Calu3 (cell line): ENCODE measurements at regions of chr6 and their contacts with region 1.

Region 1: GRCh38 chr6:25312703-25313501 is 33.7 kb downstream of the CARMIL1 start:
- DNase-seq: peak; percentile 51
- H3K4me3 Mint-ChIP-seq: peak overlapping the region; percentile 54
- H3K27ac Mint-ChIP-seq: peak overlapping the region; percentile 85
- H3K4me1 Mint-ChIP-seq: peaks cover 84% of the 10 kb centered on the region
- H3K27me3 Mint-ChIP-seq: no peaks in the 10 kb centered on the region
- CTCF ChIP-seq: no peak

Region 2: GRCh38 chr6:25263657-25264056 is 49.2 kb before region 1 on chr6:
- CTCF ChIA-PET with region 1: interaction called, 36 read pairs
- intact Hi-C with region 1: loop called (anchors 10 kb)
- DNase-seq: no peak
- H3K4me3 Mint-ChIP-seq: no peak overlapping the region
- H3K27ac Mint-ChIP-seq: no peak overlapping the region
- H3K4me1 Mint-ChIP-seq: peaks cover 10% of the 10 kb centered on the region
- H3K27me3 Mint-ChIP-seq: no peaks in the 10 kb centered on the region
- CTCF ChIP-seq: no peak

Region 3: GRCh38 chr6:25297039-25297441 is 15.9 kb before region 1 on chr6:
- CTCF ChIA-PET with region 1: interaction called, 22 read pairs
- intact Hi-C with region 1: loop called (anchors 2 kb)
- DNase-seq: no peak
- H3K4me3 Mint-ChIP-seq: no peak overlapping the region
- H3K27ac Mint-ChIP-seq: no peak overlapping the region
- H3K4me1 Mint-ChIP-seq: peaks cover 62% of the 10 kb centered on the region
- H3K27me3 Mint-ChIP-seq: no peaks in the 10 kb centered on the region
- CTCF ChIP-seq: no peak

Region 4: GRCh38 chr6:25302677-25303128 is 10.2 kb before region 1 on chr6:
- CTCF ChIA-PET with region 1: interaction called, 22 read pairs
- intact Hi-C with region 1: loop called (anchors 1 kb)
- DNase-seq: peak; percentile 35
- H3K4me3 Mint-ChIP-seq: peak overlapping the region; percentile 18
- H3K27ac Mint-ChIP-seq: peak overlapping the region; percentile 17
- H3K4me1 Mint-ChIP-seq: peaks cover 57% of the 10 kb centered on the region
- H3K27me3 Mint-ChIP-seq: no peaks in the 10 kb centered on the region
- CTCF ChIP-seq: no peak

Region 5: DNA sequence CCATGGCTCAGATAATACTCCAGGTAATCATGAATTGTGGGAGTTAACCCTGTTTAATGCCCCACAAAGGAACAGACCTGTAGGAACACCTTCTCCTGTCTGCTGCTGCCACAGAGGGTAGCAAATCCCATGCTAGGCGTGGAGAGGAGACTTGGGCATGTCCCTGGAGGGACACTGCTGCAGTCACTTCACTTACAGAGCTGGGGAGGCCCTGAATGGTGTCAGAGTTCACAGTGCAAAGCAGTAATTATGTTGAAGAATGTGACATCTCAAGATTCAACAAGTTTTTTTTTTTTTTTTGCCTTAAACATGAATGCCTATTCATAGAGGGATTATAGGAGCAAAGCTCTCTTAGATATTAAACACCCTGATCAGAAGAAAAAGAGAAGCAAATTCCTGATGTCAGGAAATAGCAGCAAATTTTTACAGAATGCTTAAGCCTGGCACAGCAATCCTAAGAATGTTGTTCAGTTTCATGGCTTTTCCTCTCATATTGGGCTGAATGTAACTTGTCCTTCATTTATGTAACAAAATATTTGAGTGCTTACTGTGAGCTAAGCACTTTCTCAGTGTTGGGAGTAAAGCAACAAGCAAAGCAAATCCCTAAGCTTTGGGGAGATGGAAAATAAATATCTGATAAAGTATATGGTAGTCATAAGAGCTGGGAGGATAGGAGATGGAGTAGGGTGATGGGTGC is 11.3 kb after region 1 on chr6:
- CTCF ChIA-PET with region 1: interaction called, 18 read pairs
- intact Hi-C with region 1: no loop called
- DNase-seq: no peak
- H3K4me3 Mint-ChIP-seq: no peak overlapping the region
- H3K27ac Mint-ChIP-seq: no peak overlapping the region
- H3K4me1 Mint-ChIP-seq: peaks cover 28% of the 10 kb centered on the region
- H3K27me3 Mint-ChIP-seq: no peaks in the 10 kb centered on the region
- CTCF ChIP-seq: no peak

Region 6: GRCh38 chr6:25334793-25335413 is 22.0 kb after region 1 on chr6:
- CTCF ChIA-PET with region 1: interaction called, 16 read pairs
- intact Hi-C with region 1: no loop called
- DNase-seq: no peak
- H3K4me3 Mint-ChIP-seq: no peak overlapping the region
- H3K27ac Mint-ChIP-seq: no peak overlapping the region
- H3K4me1 Mint-ChIP-seq: peaks cover 71% of the 10 kb centered on the region
- H3K27me3 Mint-ChIP-seq: no peaks in the 10 kb centered on the region
- CTCF ChIP-seq: no peak

Region 7: GRCh38 chr6:25342802-25343201 is 29.9 kb after region 1 on chr6:
- CTCF ChIA-PET with region 1: interaction called, 11 read pairs
- intact Hi-C with region 1: no loop called
- DNase-seq: no peak
- H3K4me3 Mint-ChIP-seq: no peak overlapping the region
- H3K27ac Mint-ChIP-seq: no peak overlapping the region
- H3K4me1 Mint-ChIP-seq: peaks cover 41% of the 10 kb centered on the region
- H3K27me3 Mint-ChIP-seq: no peaks in the 10 kb centered on the region
- CTCF ChIP-seq: no peak